ENCODE measurements at regions of chr5 and their contacts with region 1.

Region 1: GRCh38 chr5:142600611-142601358 is 85.1 kb downstream of the FGF1 start:
- DNase-seq: no peak
- ATAC-seq: no peak
- H3K4me3 Mint-ChIP-seq: no peak overlapping the region
- H3K27ac Mint-ChIP-seq: no peak overlapping the region
- H3K4me1 Mint-ChIP-seq: peaks cover 30% of the 10 kb centered on the region
- H3K27me3 Mint-ChIP-seq: no peaks in the 10 kb centered on the region
- CTCF ChIP-seq: no peak

Region 2: GRCh38 chr5:142587354-142587965 is 13.3 kb before region 1 on chr5:
- CTCF ChIA-PET with region 1: interaction called, 11 read pairs
- POLR2A ChIA-PET with region 1: no interaction called
- DNase-seq: peak; percentile 53
- ATAC-seq: peak; percentile 81
- H3K4me3 Mint-ChIP-seq: no peak overlapping the region
- H3K27ac Mint-ChIP-seq: no peak overlapping the region
- H3K4me1 Mint-ChIP-seq: peaks cover 20% of the 10 kb centered on the region
- H3K27me3 Mint-ChIP-seq: no peaks in the 10 kb centered on the region; the same call in 1 of the 2 replicates
- CTCF ChIP-seq: peak; percentile 39; the same call in 1 of the 2 replicates

Measured in WTC11 (cell line).